ENCODE measurements at regions of chr1 and their contacts with region 1.

Region 1: DNA sequence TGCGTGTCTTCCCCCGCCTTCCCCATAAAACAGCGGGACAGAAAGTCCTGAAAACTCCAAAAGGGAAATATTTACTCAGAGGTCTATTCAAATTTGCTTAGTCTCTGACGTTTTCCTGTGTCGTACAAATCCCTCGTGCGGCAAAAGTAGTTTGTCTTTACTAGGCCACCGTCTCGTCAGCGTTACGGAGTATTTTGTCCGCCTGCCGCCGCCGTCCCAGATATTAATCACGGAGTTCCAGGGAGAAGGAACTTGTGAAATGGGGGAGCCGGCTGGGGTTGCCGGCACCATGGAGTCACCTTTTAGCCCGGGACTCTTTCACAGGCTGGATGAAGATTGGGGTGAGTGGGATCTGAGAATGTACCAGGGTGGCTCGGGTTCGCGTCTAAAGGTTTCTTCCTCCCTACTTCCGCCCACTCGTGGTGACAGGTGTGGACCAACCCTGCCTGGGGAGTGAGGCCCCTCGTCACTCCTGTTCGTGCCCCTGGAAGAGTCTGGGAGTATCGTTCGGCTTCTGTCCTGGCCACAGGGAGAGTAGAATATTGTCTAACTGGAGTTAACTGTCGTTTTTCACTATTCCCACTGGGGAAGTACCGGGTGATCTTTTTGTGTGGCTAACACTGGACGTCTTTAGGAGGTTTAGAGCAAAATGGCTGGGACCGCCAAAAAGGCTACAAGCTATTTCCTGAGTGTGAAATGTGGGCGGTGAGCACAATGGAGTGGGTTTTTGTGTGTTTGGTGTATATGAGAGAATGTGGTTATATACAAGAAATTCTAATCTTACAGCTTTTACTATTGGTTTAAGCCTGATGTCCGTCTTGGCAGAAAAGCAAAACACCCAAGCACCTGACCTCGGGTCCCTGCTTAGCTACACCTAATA is at the start of gene ATF6:
- DNase-seq: peak; percentile 63 to 90 (median 73)
- ATAC-seq: peak; percentile 79 to 82 (median 82)
- H3K4me3 ChIP-seq: peak within 1 kb of the TSS; percentile 69 to 97
- H3K4me3 Mint-ChIP-seq: peak within 1 kb of the TSS; percentile 99 to 100 (median 99)
- H3K27ac ChIP-seq: peak within 1 kb of the TSS; percentile 75
- H3K27ac Mint-ChIP-seq: peak within 1 kb of the TSS; percentile 94 to 97
- H3K4me1 ChIP-seq: peaks cover 30 to 35% of the 10 kb centered on the region in 2 experiments
- H3K4me1 Mint-ChIP-seq: peaks cover 42 to 45% (median 45%) of the 10 kb centered on the region in 3 donors
- H3K27me3 ChIP-seq: no peaks in the 10 kb centered on the region
- H3K27me3 Mint-ChIP-seq: no peaks in the 10 kb centered on the region
- total RNA-seq, gene ATF6: 18.7 to 27.6 (median 21.9) TPM

Region 2: GRCh38 chr1:161726596-161727457 is 39.5 kb before region 1 on chr1:
- CTCF ChIA-PET with region 1: no interaction called
- POLR2A ChIA-PET with region 1: no interaction called
- DNase-seq: peak; percentile 35 to 81 (median 64)
- ATAC-seq: peak; percentile 69 to 74 (median 73)
- H3K4me3 ChIP-seq: peak overlapping the region; percentile 77 to 92
- H3K4me3 Mint-ChIP-seq: peak overlapping the region; percentile 91 to 98 (median 95)
- H3K27ac ChIP-seq: peak overlapping the region; percentile 57
- H3K27ac Mint-ChIP-seq: peak overlapping the region; percentile 86 to 90
- H3K4me1 ChIP-seq: peaks cover 9 to 41% of the 10 kb centered on the region in 2 experiments
- H3K4me1 Mint-ChIP-seq: peaks cover 34 to 56% (median 42%) of the 10 kb centered on the region in 3 donors
- H3K27me3 ChIP-seq: peaks cover 8 to 11% of the 10 kb centered on the region in 2 experiments
- H3K27me3 Mint-ChIP-seq: peaks cover 0 to 3% of the 10 kb centered on the region in 2 donors

Region 3: GRCh38 chr1:161749509-161750407 is 16.6 kb before region 1 on chr1 and contains the start of gene DUSP12:
- CTCF ChIA-PET with region 1: interaction called in 1 of 2 experiments, 6 read pairs
- POLR2A ChIA-PET with region 1: interaction called in 1 of 2 experiments, 13 read pairs
- DNase-seq: peak; percentile 70 to 90 (median 81)
- ATAC-seq: peak; percentile 98 to 100 (median 99)
- H3K4me3 ChIP-seq: peak within 1 kb of the TSS; percentile 72 to 92
- H3K4me3 Mint-ChIP-seq: peak within 1 kb of the TSS; percentile 98 to 99 (median 99)
- H3K27ac ChIP-seq: peak within 1 kb of the TSS; percentile 60
- H3K27ac Mint-ChIP-seq: peak within 1 kb of the TSS; percentile 96 to 98
- H3K4me1 ChIP-seq: peaks cover 0 to 14% of the 10 kb centered on the region in 2 experiments
- H3K4me1 Mint-ChIP-seq: peaks cover 43 to 44% (median 43%) of the 10 kb centered on the region in 3 donors
- H3K27me3 ChIP-seq: no peaks in the 10 kb centered on the region
- H3K27me3 Mint-ChIP-seq: peaks cover 2 to 3% of the 10 kb centered on the region in 2 donors
- total RNA-seq, gene DUSP12: 18.9 to 33.5 (median 29.1) TPM

Region 4: GRCh38 chr1:162458236-162458635 is 691.9 kb after region 1 on chr1:
- CTCF ChIA-PET with region 1: no interaction called
- POLR2A ChIA-PET with region 1: no interaction called
- DNase-seq: no peak
- ATAC-seq: no peak
- H3K4me3 ChIP-seq: no peak overlapping the region
- H3K4me3 Mint-ChIP-seq: no peak overlapping the region
- H3K27ac ChIP-seq: no peak overlapping the region
- H3K27ac Mint-ChIP-seq: no peak overlapping the region
- H3K4me1 ChIP-seq: no peaks in the 10 kb centered on the region
- H3K4me1 Mint-ChIP-seq: no peaks in the 10 kb centered on the region
- H3K27me3 ChIP-seq: no peaks in the 10 kb centered on the region
- H3K27me3 Mint-ChIP-seq: peaks cover 3 to 4% of the 10 kb centered on the region in 2 donors